Posterior vena cava (tissue), 2 donors: ENCODE measurements at regions of chr2 and their contacts with region 1.

Region 1: DNA sequence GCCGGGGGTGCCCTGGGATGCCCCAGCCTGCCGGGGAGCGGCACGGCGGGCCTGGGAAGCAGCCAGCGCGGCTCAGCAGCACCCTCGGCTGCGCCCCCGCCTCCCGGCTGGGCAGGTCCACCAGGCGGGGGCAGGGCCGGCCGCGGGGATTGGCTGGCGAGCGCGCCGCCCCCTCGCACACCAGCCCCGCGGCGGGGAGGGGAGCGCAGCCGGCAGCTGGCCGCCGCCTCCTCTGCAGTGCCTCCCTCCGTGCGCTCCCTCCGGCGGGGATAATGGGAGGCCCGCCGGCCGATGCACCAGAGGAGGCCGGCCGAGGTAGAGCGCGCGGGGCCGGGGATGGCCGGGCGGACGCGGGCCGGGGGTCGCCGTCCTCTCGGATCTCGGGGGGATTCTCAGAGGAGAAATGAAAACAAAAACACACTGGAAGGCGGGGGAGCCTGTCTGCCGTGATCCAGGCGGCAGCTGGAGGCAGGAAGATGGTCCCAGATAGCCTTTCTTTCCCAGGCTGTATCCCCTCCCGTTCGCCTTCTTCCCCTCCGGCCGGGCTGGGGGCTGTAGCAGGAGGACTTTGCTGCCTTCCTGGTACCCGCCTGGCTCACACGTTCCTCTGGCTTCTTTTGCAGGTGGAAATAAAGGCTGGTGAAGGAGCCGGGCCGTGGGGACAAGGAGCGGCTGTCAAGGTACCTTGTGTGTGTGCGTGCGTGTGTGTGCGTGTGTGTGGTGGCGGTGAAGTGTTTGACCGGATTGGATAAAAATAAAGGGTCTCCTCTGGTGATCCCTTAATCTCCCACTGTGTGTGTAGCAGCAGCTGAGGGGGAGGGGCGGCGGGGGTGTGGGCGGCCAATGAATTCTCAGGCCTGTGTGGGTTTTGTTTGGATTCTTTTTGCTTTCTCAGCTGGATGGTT is 18.0 kb downstream of the TET3 start:
- DNase-seq: peak; percentile 92

Region 2: DNA sequence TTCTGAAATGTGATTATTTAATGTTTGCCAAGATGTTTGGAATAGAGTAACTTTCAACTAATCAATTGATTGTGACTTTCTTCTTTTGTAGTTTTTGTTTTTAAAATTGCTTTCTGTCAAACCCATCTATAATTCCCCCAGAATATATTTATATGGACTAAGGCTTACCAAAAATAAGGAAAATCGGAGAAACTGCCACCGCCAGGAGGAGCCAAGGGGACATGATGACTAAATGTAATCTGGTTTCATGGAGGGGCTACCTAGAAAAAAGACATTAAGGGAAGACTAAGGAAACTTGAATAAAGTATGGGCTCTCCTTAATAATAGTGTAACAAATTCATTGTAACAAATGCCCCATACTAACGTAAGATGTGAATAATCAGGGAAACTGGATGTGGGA is 125.5 kb after region 1 on chr2:
- intact Hi-C with region 1: loop called in 1 of 2 experiments (anchors 5 kb)
- DNase-seq: no peak